ENCODE measurements at regions of chr1 and their contacts with region 1.

Region 1: DNA sequence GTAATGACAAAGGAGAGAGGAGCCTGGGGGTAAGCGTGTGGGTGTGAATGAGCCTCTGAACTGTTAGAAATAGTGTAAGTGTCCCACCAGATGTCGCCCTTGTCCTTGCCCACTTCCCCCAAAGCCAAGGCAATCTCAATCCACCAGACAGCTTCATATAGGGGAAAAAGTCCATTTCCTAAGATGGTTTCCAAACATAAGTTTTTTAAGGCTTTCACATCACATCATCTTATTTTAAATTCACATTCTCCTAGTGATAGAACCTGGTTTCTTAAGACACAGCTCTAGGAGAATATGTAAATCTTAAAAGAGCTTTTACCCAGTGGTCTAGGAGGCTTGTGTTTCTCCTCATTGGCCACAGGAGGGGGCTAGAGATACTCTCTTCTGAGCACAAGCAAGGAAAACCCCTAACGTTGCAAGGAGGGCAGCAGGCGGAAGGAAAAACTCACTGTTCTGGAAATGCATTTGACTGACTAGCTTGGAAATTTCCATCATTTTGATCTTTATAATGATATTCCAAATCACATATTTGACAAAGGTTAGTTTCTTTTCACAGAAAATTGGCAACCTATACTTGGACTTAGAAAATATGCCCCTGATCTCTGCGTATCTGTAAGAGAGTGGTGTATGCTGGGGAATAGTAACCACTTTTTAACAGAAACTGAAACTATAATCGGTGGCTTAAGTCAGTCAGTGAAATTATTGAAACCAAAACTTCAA is 51.9 kb upstream of the LPAR3 start:
- DNase-seq: peak; percentile 93
- ATAC-seq: peak; percentile 91
- H3K4me3 ChIP-seq: peak overlapping the region; percentile 1; the same call in 1 of the 2 replicates
- H3K27ac ChIP-seq: no peak overlapping the region
- H3K4me1 ChIP-seq: peaks cover 9% of the 10 kb centered on the region
- H3K27me3 ChIP-seq: peaks cover 2% of the 10 kb centered on the region; the same call in 1 of the 2 replicates
- CTCF ChIP-seq: peak; percentile 70
- POLR2A ChIP-seq: peak; percentile 51
- RAD21 ChIP-seq: peak; percentile 72

Region 2: DNA sequence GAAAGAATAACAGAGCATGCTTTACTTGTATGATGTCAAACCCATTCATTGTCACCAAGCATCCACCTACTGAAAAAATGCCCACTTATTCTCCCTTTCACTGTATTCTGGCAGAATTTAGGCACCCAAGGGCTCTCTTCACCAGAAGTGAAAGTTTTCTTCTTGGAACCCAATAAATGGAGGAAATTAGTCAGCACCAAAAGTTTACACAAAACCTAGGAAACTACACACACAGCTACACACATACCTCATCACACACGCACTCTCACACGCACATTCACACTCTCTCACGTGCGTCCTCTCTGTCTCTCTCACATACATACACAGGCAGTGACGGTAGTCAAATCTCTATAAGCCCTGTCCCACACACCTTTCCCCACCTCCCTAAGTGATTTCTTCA is 14.4 kb after region 1 on chr1:
- CTCF ChIA-PET with region 1: interaction called, 19 read pairs
- POLR2A ChIA-PET with region 1: no interaction called
- dilution Hi-C with region 1: no loop called
- in situ Hi-C with region 1: no loop called
- intact Hi-C with region 1: no loop called
- DNase-seq: peak; percentile 66
- ATAC-seq: peak; percentile 18; the same call in 1 of the 2 replicates
- H3K4me3 ChIP-seq: no peak overlapping the region
- H3K27ac ChIP-seq: no peak overlapping the region
- H3K4me1 ChIP-seq: peaks cover 2% of the 10 kb centered on the region
- H3K27me3 ChIP-seq: peaks cover 4% of the 10 kb centered on the region; the same call in 1 of the 2 replicates
- CTCF ChIP-seq: no peak
- POLR2A ChIP-seq: no peak
- RAD21 ChIP-seq: no peak

Region 3: DNA sequence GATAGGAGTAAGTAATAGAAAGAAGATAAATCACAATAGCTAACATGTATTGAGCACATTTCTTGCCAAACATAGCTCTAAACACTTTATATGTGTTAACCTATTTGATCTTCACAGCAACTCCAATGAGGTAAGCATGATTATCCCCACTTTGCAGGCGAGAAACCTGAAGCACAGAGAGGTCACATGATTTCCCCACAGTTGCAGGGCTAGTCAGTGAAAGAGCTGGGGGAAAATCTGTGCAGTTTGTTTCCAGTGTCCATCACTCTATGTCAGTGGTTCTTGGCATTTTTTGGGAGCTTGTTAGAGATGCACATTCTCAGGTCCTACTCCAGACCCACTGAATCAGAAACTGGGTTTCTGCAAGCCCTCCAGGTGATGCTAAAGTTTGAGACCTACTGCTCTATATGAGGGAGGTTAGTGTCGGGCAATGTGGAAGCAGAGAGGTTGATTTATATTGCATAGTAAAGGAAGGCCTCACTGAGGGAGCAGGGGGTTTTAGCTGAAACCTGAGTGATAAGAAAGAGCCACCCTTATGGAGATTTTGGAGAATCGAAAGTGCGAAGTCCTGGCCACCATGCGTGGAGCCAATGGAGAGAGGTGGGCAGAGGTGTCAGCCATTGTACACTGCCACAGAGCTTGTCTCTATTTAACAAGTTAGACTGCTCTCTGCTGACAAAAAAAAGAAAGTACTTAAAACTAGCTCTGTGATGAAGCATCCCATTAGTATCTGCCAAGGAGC is 82.5 kb after region 1 on chr1:
- CTCF ChIA-PET with region 1: interaction called, 31 read pairs
- POLR2A ChIA-PET with region 1: interaction called, 4 read pairs
- dilution Hi-C with region 1: no loop called
- in situ Hi-C with region 1: no loop called
- intact Hi-C with region 1: loop called (anchors 1 kb)
- DNase-seq: peak; percentile 2
- ATAC-seq: peak; percentile 53; the same call in 1 of the 2 replicates
- H3K4me3 ChIP-seq: no peak overlapping the region
- H3K27ac ChIP-seq: no peak overlapping the region
- H3K4me1 ChIP-seq: no peaks in the 10 kb centered on the region
- H3K27me3 ChIP-seq: peaks cover 14% of the 10 kb centered on the region
- CTCF ChIP-seq: 0 out of 2 replicates have a peak, but pooled peaks have one; percentile 20
- POLR2A ChIP-seq: no peak
- RAD21 ChIP-seq: no peak

Region 4: DNA sequence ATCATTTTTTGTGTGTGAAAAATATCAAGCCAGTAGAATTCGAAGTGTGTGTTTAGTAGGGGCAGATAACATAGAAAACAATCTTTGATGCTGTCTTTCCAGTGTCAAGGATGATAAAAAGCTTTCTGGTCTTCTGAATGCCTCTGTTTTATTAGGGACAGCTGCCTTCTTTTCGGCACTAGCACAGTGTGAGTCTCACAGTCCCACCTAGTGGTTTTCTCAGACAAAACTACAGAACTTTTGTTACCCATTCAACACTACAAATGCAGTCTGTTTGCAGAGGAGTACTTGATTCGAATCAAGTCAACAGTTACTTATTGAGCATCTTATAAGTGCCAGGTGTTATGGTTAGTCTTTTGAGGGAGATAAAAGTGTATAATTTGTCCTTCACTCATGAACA is 134.0 kb after region 1 on chr1:
- CTCF ChIA-PET with region 1: interaction called, 4 read pairs
- POLR2A ChIA-PET with region 1: no interaction called
- dilution Hi-C with region 1: no loop called
- in situ Hi-C with region 1: no loop called
- intact Hi-C with region 1: loop called (anchors 1 kb)
- DNase-seq: peak; percentile 17
- ATAC-seq: peak; percentile 69; the same call in 1 of the 2 replicates
- H3K4me3 ChIP-seq: no peak overlapping the region
- H3K27ac ChIP-seq: no peak overlapping the region
- H3K4me1 ChIP-seq: no peaks in the 10 kb centered on the region
- H3K27me3 ChIP-seq: peaks cover 7% of the 10 kb centered on the region
- CTCF ChIP-seq: peak; percentile 34; the same call in 1 of the 2 replicates
- POLR2A ChIP-seq: no peak
- RAD21 ChIP-seq: peak; percentile 32

Region 5: GRCh38 chr1:85109475-85109874 is 164.5 kb after region 1 on chr1:
- CTCF ChIA-PET with region 1: interaction called, 11 read pairs
- POLR2A ChIA-PET with region 1: no interaction called
- dilution Hi-C with region 1: no loop called
- in situ Hi-C with region 1: no loop called
- intact Hi-C with region 1: loop called (anchors 1 kb)
- DNase-seq: peak; percentile 75
- ATAC-seq: peak; percentile 99
- H3K4me3 ChIP-seq: no peak overlapping the region
- H3K27ac ChIP-seq: no peak overlapping the region
- H3K4me1 ChIP-seq: no peaks in the 10 kb centered on the region
- H3K27me3 ChIP-seq: no peaks in the 10 kb centered on the region
- CTCF ChIP-seq: peak; percentile 92
- POLR2A ChIP-seq: no peak
- RAD21 ChIP-seq: peak; percentile 94

Region 6: DNA sequence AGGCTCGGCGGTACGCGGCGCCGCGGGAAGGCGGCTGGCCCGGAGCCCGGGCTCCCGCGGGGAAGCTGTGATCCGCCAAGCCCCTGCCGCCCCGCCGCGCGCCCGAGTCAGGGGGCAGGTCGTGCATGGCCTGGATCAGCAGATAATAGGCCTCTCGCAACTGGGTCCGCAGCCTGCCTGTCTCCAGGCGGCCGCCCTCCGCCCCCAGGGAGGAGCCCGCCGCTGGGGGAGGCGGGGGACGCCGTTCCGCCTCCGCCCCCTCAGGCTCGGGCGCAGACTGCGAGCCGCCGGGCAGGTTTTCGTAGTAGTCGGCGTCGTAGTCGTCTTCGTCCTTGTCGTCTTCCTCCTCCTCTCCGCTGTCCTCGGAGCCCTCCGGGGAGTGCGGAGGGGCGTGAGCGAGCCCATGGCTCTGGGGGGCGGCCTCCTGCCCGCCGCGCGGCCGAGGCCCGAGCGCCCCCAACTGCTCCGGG is 256.0 kb after region 1 on chr1 and contains the start of gene SYDE2:
- CTCF ChIA-PET with region 1: interaction called, 3 read pairs
- POLR2A ChIA-PET with region 1: no interaction called
- dilution Hi-C with region 1: no loop called
- in situ Hi-C with region 1: no loop called
- intact Hi-C with region 1: loop called (anchors 1 kb)
- DNase-seq: peak; percentile 58
- ATAC-seq: peak; percentile 90
- H3K4me3 ChIP-seq: peak within 1 kb of the TSS; percentile 73
- H3K27ac ChIP-seq: peak within 1 kb of the TSS; percentile 88
- H3K4me1 ChIP-seq: peaks cover 6% of the 10 kb centered on the region
- H3K27me3 ChIP-seq: no peaks in the 10 kb centered on the region
- CTCF ChIP-seq: no peak
- POLR2A ChIP-seq: peak; percentile 40; the same call in 1 of the 2 replicates
- RAD21 ChIP-seq: no peak
- total RNA-seq, gene SYDE2: 10.0 and 11.7 TPM in 2 replicates

Region 7: DNA sequence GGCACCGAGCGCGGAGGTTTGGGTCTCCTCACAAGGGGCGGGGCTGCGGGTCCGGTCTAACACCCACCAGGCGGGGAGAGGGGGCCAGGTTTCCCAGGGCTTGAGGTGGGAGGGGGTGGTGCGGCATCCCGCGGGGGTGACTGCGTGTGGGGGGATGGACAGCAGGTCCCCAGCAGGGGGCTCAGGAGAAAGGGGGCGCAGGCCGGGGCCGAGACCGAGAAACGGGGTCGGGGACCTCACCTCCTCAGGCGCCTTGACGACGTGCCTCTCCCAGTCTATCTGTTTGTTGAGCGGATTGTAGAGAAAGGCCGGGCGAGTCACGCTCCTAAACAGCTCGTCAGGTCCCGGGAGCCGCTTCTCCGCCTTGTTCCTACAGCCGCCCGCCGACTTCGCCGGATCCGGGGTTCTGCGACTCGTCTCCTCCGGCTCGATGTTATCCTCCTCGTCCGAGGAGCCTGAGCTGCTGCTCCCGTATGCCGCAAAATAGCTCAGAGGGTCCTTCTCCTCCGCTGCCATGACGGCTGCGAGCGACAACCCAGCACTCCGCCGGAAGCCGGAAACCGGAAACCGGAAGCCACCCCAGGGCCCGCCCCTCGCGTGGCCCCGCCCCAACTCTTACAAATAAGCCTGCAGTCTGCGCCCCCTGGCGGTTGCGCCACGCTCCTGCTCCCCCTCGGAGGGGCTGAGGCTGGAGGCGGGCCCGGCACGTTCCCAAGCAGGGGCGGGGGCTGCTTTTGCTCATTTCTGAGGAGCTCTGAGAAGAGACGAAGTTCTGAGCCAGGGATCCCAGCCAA is 314.4 kb after region 1 on chr1 and contains the start of gene C1orf52:
- CTCF ChIA-PET with region 1: interaction called, 38 read pairs
- POLR2A ChIA-PET with region 1: no interaction called
- dilution Hi-C with region 1: no loop called
- in situ Hi-C with region 1: loop called (anchors 5 kb)
- intact Hi-C with region 1: loop called (anchors 1 kb)
- DNase-seq: peak; percentile 90
- ATAC-seq: peak; percentile 94
- H3K4me3 ChIP-seq: peak within 1 kb of the TSS; percentile 83
- H3K27ac ChIP-seq: peak within 1 kb of the TSS; percentile 85
- H3K4me1 ChIP-seq: peaks cover 3% of the 10 kb centered on the region; the same call in 1 of the 2 replicates
- H3K27me3 ChIP-seq: no peaks in the 10 kb centered on the region
- CTCF ChIP-seq: peak; percentile 95
- POLR2A ChIP-seq: peak; percentile 81
- RAD21 ChIP-seq: peak; percentile 58
- total RNA-seq, gene C1orf52: 16.3 and 23.1 TPM in 2 replicates

Measured in IMR-90 (cell line).